ENCODE measurements at regions of chr10 and their contacts with region 1.

Region 1: DNA sequence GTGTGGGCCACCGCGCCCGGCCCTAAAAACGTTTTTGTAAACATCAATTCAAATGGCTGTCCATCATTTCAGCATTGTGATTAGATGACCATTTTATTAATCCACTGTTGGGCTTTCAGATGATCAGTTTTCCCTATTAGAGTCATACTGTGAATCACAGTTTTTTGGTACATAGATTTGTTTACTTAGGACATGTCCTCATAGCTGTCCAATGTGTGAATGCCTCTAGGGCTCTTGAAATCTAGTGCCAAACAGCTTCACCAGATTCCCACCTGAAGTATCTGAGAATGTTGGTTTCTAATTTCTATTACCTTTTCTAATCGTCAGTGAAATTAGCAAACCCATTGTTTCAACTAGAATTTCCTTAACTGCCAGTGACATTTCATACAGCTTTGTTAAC is 66.8 kb downstream of the UPF2 start:
- DNase-seq: no peak
- ATAC-seq: no peak
- H3K4me3 Mint-ChIP-seq: no peak overlapping the region
- H3K27ac Mint-ChIP-seq: no peak overlapping the region
- H3K4me1 Mint-ChIP-seq: no peaks in the 10 kb centered on the region
- H3K27me3 Mint-ChIP-seq: no peaks in the 10 kb centered on the region

Region 2: GRCh38 chr10:11986593-11987216 is 10.9 kb after region 1 on chr10:
- CTCF ChIA-PET with region 1: interaction called, 14 read pairs
- POLR2A ChIA-PET with region 1: no interaction called
- intact Hi-C with region 1: no loop called
- DNase-seq: peak; percentile 88
- ATAC-seq: peak; percentile 66
- H3K4me3 Mint-ChIP-seq: no peak overlapping the region
- H3K27ac Mint-ChIP-seq: peak overlapping the region; percentile 69
- H3K4me1 Mint-ChIP-seq: peaks cover 7% of the 10 kb centered on the region
- H3K27me3 Mint-ChIP-seq: no peaks in the 10 kb centered on the region

Measured in activated CD4-positive, alpha-beta T cell treated with anti-CD3 and anti-CD28 coated beads for 36 hours (primary cell).